Left lung (tissue), 14 donors: ENCODE measurements at regions of chr3 and their contacts with region 1.

Region 1: GRCh38 chr3:14467814-14468620 is 65.6 kb downstream of the SLC6A6 start:
- DNase-seq: peak in 2 of 4 donors; percentile 24 to 56
- ATAC-seq: peak; percentile 56
- H3K4me3 ChIP-seq: no peak overlapping the region
- H3K27ac ChIP-seq: no peak overlapping the region
- H3K4me1 ChIP-seq: peaks cover 9 to 11% of the 10 kb centered on the region in 2 donors
- H3K27me3 ChIP-seq: no peaks in the 10 kb centered on the region
- CTCF ChIP-seq: peak; percentile 81

Region 2: DNA sequence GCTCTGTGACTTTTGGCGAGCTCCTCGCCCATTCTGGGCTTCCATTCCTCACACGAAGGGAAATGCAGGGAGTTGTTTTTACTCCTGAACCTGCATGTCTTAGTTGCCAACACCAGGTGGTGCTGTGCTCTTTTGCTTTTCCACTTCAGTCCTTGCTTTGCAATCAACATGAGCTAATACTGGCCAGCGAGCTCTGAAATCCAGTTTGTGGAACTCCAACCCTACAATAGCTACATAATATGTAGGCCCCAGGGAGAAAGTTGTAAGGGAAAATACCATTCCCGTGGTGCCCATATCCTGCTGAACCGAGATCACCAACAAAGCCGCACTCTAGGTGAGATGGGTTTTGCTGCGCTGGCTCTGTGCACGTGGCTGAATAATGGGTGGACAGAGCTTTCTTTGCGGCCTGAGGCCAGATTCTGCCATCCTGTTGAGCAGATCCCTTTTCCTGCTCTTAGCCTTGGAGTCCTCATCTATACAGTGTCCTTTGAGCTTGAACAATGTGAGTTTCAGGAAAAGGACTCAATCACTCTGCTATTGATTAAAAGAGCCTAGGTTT is 264.4 kb before region 1 on chr3:
- intact Hi-C with region 1: loop called in 1 of 2 experiments (anchors 5 kb)
- DNase-seq: peak in 3 of 4 donors; percentile 61 to 90 (median 77)
- ATAC-seq: peak; percentile 92
- H3K4me3 ChIP-seq: no peak overlapping the region
- H3K27ac ChIP-seq: no peak overlapping the region
- H3K4me1 ChIP-seq: peaks cover 17 to 28% of the 10 kb centered on the region in 2 donors
- H3K27me3 ChIP-seq: no peaks in the 10 kb centered on the region
- CTCF ChIP-seq: peak; percentile 76 to 83

Region 3: DNA sequence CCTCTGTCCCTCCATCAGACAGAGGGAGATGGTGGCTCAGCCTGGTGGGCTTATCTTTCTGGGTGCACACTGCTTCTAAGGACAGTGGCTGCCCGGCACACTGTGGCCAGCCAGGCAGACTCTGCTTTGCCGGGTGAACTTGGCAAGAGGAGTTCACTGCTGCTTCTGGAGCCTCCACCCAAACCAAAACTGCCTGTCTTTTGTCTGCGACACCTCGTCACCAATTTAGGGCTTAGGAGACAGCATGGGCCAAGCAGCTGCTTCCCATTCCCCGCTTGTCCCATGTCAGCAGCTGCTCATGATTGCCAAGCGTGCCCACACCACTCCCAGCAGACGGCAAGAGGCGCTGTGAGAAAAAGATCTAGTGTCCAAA is 232.1 kb before region 1 on chr3:
- intact Hi-C with region 1: no loop called
- DNase-seq: peak in 2 of 4 donors; percentile 88 to 89
- ATAC-seq: no peak
- H3K4me3 ChIP-seq: no peak overlapping the region
- H3K27ac ChIP-seq: peak overlapping the region in 1 of 2 donors; percentile 68
- H3K4me1 ChIP-seq: peaks cover 5 to 24% of the 10 kb centered on the region in 2 donors
- H3K27me3 ChIP-seq: no peaks in the 10 kb centered on the region
- CTCF ChIP-seq: no peak

Region 4: GRCh38 chr3:14261229-14261628 is 206.8 kb before region 1 on chr3:
- intact Hi-C with region 1: loop called in 1 of 2 experiments (anchors 5 kb)
- DNase-seq: peak; percentile 75 to 94 (median 85)
- ATAC-seq: peak; percentile 94
- H3K4me3 ChIP-seq: no peak overlapping the region
- H3K27ac ChIP-seq: no peak overlapping the region
- H3K4me1 ChIP-seq: no peaks in the 10 kb centered on the region
- H3K27me3 ChIP-seq: peaks cover 0 to 1% of the 10 kb centered on the region in 2 donors
- CTCF ChIP-seq: peak; percentile 97 to 99

Region 5: GRCh38 chr3:14602006-14602803 is 134.2 kb after region 1 on chr3:
- intact Hi-C with region 1: no loop called
- DNase-seq: no peak
- ATAC-seq: no peak
- H3K4me3 ChIP-seq: no peak overlapping the region
- H3K27ac ChIP-seq: no peak overlapping the region
- H3K4me1 ChIP-seq: peaks cover 7% of the 10 kb centered on the region in 2 donors
- H3K27me3 ChIP-seq: peaks cover 24 to 79% of the 10 kb centered on the region in 2 donors
- CTCF ChIP-seq: peak in 1 of 2 donors; percentile 14